ENCODE measurements at regions of chr9 and their contacts with region 1.

Region 1: DNA sequence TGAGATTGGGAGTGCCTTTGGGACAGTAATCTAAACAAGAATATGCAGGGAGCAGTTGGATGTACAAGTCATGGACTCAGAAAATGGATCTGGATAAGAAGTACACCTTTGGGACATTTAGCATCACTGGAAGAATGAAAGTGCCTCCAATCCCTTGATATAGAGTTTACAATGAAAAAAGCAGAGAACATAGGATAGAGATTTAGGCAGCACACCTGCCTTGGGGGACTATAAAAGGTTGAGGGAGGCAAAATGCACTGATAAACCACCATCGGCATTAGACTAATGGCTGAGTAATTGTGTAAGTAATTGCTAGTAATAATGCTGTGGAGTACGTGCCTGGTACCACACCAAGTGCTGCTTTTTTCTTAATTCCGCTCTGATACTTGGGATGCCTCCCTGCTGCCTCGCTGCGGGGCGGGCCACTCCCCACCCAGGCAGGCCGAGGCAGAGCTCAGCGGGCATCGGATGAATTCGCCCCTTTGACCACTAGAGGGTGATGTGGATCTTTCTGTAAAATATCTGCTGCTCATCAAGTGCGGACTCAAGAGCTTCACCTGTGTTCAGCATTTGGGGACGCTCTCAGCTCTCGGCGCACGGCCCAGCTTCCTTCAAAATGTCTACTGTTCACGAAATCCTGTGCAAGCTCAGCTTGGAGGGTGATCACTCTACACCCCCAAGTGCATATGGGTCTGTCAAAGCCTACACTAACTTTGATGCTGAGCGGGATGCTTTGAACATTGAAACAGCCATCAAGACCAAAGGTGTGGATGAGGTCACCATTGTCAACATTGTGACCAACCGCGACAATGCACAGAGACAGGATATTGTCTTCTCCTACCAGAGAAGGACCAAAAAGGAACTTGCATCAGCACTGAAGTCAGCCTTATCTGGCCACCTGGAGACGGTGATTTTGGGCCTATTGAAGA is 99.9 kb downstream of the ANKRD18B start:
- DNase-seq: peak; percentile 80
- ATAC-seq: peak; percentile 97
- H3K4me3 Mint-ChIP-seq: no peak overlapping the region
- H3K27ac Mint-ChIP-seq: no peak overlapping the region
- H3K4me1 Mint-ChIP-seq: peaks cover 7% of the 10 kb centered on the region
- H3K27me3 Mint-ChIP-seq: peaks cover 19% of the 10 kb centered on the region
- CTCF ChIP-seq: peak; percentile 80

Region 2: GRCh38 chr9:33202552-33203201 is 421.2 kb before region 1 on chr9:
- CTCF ChIA-PET with region 1: no interaction called
- POLR2A ChIA-PET with region 1: no interaction called
- DNase-seq: no peak
- ATAC-seq: peak; percentile 44
- H3K4me3 Mint-ChIP-seq: no peak overlapping the region
- H3K27ac Mint-ChIP-seq: no peak overlapping the region
- H3K4me1 Mint-ChIP-seq: peaks cover 4% of the 10 kb centered on the region; the same call in 1 of the 2 replicates
- H3K27me3 Mint-ChIP-seq: peaks cover 25% of the 10 kb centered on the region
- CTCF ChIP-seq: no peak

Region 3: DNA sequence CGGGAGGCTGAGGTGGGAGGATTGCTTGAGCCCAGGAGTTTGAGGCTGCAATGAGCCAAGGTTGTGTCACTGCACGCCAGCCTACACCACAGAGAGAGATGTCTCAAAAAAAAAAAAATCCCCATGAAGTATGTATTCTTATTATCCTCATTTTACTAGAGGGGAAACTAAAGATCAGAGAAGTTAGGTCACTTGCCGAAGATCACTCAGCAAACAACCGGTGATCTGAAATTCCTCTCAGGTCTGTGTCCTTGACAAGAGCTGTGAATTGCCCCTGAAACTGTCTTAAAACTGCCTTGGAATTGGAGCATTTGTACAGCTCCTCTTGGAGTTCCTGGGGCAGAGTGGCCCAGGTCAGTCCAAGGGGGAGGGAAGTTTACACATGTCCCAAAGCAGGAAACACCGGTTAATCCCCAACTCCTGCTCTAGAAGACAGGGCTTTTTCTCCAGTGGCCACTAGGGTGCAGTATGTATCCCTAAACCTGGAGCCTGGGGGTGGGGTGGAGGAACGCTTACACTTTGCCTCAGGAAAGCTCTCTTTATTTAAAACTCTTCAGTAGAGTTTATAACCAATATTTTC is 249.2 kb before region 1 on chr9:
- CTCF ChIA-PET with region 1: interaction called, 10 read pairs
- POLR2A ChIA-PET with region 1: no interaction called
- DNase-seq: peak; percentile 81
- ATAC-seq: peak; percentile 87
- H3K4me3 Mint-ChIP-seq: peak overlapping the region; percentile 52
- H3K27ac Mint-ChIP-seq: peak overlapping the region; percentile 65
- H3K4me1 Mint-ChIP-seq: peaks cover 31% of the 10 kb centered on the region
- H3K27me3 Mint-ChIP-seq: no peaks in the 10 kb centered on the region
- CTCF ChIP-seq: peak; percentile 71

Region 4: DNA sequence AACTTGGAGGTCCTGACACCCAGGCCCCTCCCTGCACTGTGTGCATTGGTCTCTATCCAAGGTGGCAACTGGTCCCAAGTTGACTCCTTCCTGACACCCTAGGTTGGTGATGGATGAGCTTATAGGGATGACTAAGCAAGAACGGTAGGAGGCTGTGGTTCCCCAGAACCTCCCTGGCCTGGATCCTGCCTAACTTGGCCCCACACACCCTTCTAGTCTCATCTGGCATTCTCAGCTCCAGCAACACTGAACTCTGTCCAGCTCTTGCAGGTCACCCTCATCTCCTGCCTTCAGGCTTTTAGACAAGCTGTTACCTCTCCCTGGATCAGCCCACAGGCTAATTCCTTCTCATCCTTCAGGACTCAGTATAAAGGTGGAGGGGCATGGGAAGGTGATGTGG is 193.0 kb before region 1 on chr9:
- CTCF ChIA-PET with region 1: no interaction called
- POLR2A ChIA-PET with region 1: no interaction called
- DNase-seq: no peak
- ATAC-seq: no peak
- H3K4me3 Mint-ChIP-seq: no peak overlapping the region
- H3K27ac Mint-ChIP-seq: no peak overlapping the region
- H3K4me1 Mint-ChIP-seq: no peaks in the 10 kb centered on the region
- H3K27me3 Mint-ChIP-seq: no peaks in the 10 kb centered on the region
- CTCF ChIP-seq: no peak

Region 5: GRCh38 chr9:33524306-33524947 is 99.5 kb before region 1 on chr9:
- CTCF ChIA-PET with region 1: interaction called, 19 read pairs
- POLR2A ChIA-PET with region 1: interaction called, 3 read pairs
- DNase-seq: peak; percentile 38
- ATAC-seq: peak; percentile 72
- H3K4me3 Mint-ChIP-seq: peak overlapping the region; percentile 91
- H3K27ac Mint-ChIP-seq: no peak overlapping the region
- H3K4me1 Mint-ChIP-seq: peaks cover 13% of the 10 kb centered on the region
- H3K27me3 Mint-ChIP-seq: peaks cover 21% of the 10 kb centered on the region
- CTCF ChIP-seq: no peak

Region 6: GRCh38 chr9:33638391-33638915 is 14.5 kb after region 1 on chr9:
- CTCF ChIA-PET with region 1: interaction called, 22 read pairs
- POLR2A ChIA-PET with region 1: no interaction called
- DNase-seq: no peak
- ATAC-seq: no peak
- H3K4me3 Mint-ChIP-seq: no peak overlapping the region
- H3K27ac Mint-ChIP-seq: no peak overlapping the region
- H3K4me1 Mint-ChIP-seq: no peaks in the 10 kb centered on the region
- H3K27me3 Mint-ChIP-seq: peaks cover 2% of the 10 kb centered on the region
- CTCF ChIP-seq: no peak

Region 7: GRCh38 chr9:33676746-33677505 is 53.0 kb after region 1 on chr9:
- CTCF ChIA-PET with region 1: interaction called, 16 read pairs
- POLR2A ChIA-PET with region 1: interaction called, 4 read pairs
- DNase-seq: peak; percentile 72
- ATAC-seq: peak; percentile 87
- H3K4me3 Mint-ChIP-seq: peak overlapping the region; percentile 91
- H3K27ac Mint-ChIP-seq: peak overlapping the region; percentile 94
- H3K4me1 Mint-ChIP-seq: peaks cover 19% of the 10 kb centered on the region
- H3K27me3 Mint-ChIP-seq: peaks cover 6% of the 10 kb centered on the region; the same call in 1 of the 2 replicates
- CTCF ChIP-seq: no peak

Region 8: GRCh38 chr9:33731142-33731541 is 107.2 kb after region 1 on chr9:
- CTCF ChIA-PET with region 1: interaction called, 13 read pairs
- POLR2A ChIA-PET with region 1: interaction called, 4 read pairs
- DNase-seq: no peak
- ATAC-seq: no peak
- H3K4me3 Mint-ChIP-seq: no peak overlapping the region
- H3K27ac Mint-ChIP-seq: no peak overlapping the region
- H3K4me1 Mint-ChIP-seq: no peaks in the 10 kb centered on the region
- H3K27me3 Mint-ChIP-seq: no peaks in the 10 kb centered on the region; the same call in none of the 2 replicates
- CTCF ChIP-seq: no peak

Region 9: GRCh38 chr9:33778700-33779351 is 154.9 kb after region 1 on chr9:
- CTCF ChIA-PET with region 1: interaction called, 11 read pairs
- POLR2A ChIA-PET with region 1: no interaction called
- DNase-seq: peak; percentile 55
- ATAC-seq: peak; percentile 98
- H3K4me3 Mint-ChIP-seq: no peak overlapping the region
- H3K27ac Mint-ChIP-seq: no peak overlapping the region
- H3K4me1 Mint-ChIP-seq: no peaks in the 10 kb centered on the region
- H3K27me3 Mint-ChIP-seq: peaks cover 3% of the 10 kb centered on the region
- CTCF ChIP-seq: peak; percentile 44